ENCODE measurements at regions of chr6 and their contacts with region 1.

Region 1: DNA sequence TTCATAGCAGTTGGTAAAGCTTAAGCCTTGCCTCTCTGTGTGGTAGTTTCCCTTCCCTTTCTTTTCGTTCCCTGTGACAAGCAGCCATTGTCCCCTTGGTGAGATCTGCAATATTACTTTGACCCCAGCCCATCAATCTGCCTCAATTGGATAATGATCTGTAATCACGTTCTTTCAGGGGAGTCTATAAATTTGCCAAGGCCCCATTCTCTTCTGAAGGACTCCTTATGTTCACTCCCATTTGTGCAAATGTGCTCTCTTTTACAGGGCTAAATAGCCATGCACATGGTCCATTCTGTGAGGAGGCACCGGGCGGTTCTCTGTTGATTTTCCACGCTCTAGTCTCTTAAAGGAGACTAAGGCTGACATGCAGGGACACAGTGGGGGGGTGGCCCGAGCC is 660.4 kb upstream of the SLC35B3 start:
- DNase-seq: no peak
- H3K4me3 ChIP-seq: no peak overlapping the region
- H3K27ac ChIP-seq: no peak overlapping the region
- H3K4me1 ChIP-seq: no peaks in the 10 kb centered on the region
- CTCF ChIP-seq: no peak

Region 2: GRCh38 chr6:9576521-9576920 is 480.8 kb after region 1 on chr6:
- CTCF ChIA-PET with region 1: no interaction called
- POLR2A ChIA-PET with region 1: no interaction called
- intact Hi-C with region 1: no loop called
- DNase-seq: no peak
- H3K4me3 ChIP-seq: no peak overlapping the region
- H3K27ac ChIP-seq: no peak overlapping the region
- H3K4me1 ChIP-seq: no peaks in the 10 kb centered on the region
- CTCF ChIP-seq: no peak

Region 3: GRCh38 chr6:10414766-10415592 is 1319.2 kb after region 1 on chr6 and contains the start of gene TFAP2A:
- CTCF ChIA-PET with region 1: interaction called, 15 read pairs
- POLR2A ChIA-PET with region 1: no interaction called
- intact Hi-C with region 1: no loop called
- DNase-seq: no peak
- H3K4me3 ChIP-seq: no peak within 1 kb of the TSS
- H3K27ac ChIP-seq: no peak within 1 kb of the TSS
- H3K4me1 ChIP-seq: peaks cover 9% of the 10 kb centered on the region
- CTCF ChIP-seq: no peak
- total RNA-seq, gene TFAP2A: 0.36 and 2.0 TPM in 2 replicates